ENCODE measurements at regions of chr1 and their contacts with region 1.

Region 1: GRCh38 chr1:110619412-110620249 is 13.5 kb upstream of the KCNA2 start:
- DNase-seq: peak; percentile 88
- H3K4me3 ChIP-seq: peak overlapping the region in 2 of 4 donors; percentile 3 to 32
- H3K27ac ChIP-seq: peak overlapping the region in 3 of 4 donors; percentile 28 to 62 (median 42)
- H3K4me1 ChIP-seq: peaks cover 0 to 12% (median 6%) of the 10 kb centered on the region in 4 donors
- H3K27me3 ChIP-seq: peaks cover 36% of the 10 kb centered on the region
- CTCF ChIP-seq: peak; percentile 88 to 96 (median 89)
- EP300 ChIP-seq: no peak
- POLR2A ChIP-seq: no peak

Region 2: GRCh38 chr1:110554871-110555801 is 64.5 kb before region 1 on chr1:
- in situ Hi-C with region 1: loop called in 1 of 4 experiments (anchors 10 kb)
- intact Hi-C with region 1: loop called (anchors 10 kb)
- DNase-seq: peak; percentile 36
- H3K4me3 ChIP-seq: peak overlapping the region in 2 of 4 donors; percentile 26 to 46
- H3K27ac ChIP-seq: peak overlapping the region in 3 of 4 donors; percentile 6 to 10 (median 8)
- H3K4me1 ChIP-seq: peaks cover 0 to 11% (median 8%) of the 10 kb centered on the region in 4 donors
- H3K27me3 ChIP-seq: peaks cover 54% of the 10 kb centered on the region
- CTCF ChIP-seq: peak; percentile 64 to 73 (median 67)
- EP300 ChIP-seq: no peak
- POLR2A ChIP-seq: no peak

Region 3: DNA sequence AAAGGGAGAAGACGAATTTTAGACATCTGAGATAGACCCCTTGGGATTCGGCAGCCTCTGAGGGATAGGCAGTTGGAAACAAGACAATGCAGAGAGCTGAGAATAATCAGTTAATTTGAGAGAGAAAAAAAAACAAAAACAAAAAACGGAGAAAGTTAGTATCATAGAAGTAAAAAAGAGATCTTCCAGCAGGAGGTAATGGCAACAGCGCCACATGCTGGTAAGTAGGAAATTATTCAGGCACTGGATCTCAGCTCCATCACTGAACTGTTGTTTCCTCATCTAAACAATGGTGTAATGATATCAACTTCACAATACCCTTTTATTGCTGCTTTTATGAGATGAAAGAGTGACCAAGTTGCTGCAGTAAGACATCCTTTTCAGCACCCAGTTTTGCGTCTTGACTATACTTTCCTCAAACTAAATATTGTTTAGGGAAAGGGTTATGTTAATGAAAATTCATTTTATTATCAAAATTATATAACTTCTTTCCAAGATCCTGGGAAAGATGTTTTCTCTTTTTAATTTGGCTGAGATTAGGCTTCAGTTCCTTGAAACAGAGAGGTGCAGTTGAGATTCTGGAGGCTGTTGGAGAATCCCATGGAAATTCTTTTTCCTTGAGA is 146.5 kb after region 1 on chr1:
- in situ Hi-C with region 1: loop called in 2 of 4 experiments (anchors 5 to 10 kb)
- intact Hi-C with region 1: no loop called
- DNase-seq: peak; percentile 25
- H3K4me3 ChIP-seq: no peak overlapping the region
- H3K27ac ChIP-seq: no peak overlapping the region
- H3K4me1 ChIP-seq: peaks cover 0 to 3% (median 0%) of the 10 kb centered on the region in 4 donors
- H3K27me3 ChIP-seq: peaks cover 19% of the 10 kb centered on the region
- CTCF ChIP-seq: peak; percentile 69 to 78 (median 76)
- EP300 ChIP-seq: no peak
- POLR2A ChIP-seq: no peak

Region 4: DNA sequence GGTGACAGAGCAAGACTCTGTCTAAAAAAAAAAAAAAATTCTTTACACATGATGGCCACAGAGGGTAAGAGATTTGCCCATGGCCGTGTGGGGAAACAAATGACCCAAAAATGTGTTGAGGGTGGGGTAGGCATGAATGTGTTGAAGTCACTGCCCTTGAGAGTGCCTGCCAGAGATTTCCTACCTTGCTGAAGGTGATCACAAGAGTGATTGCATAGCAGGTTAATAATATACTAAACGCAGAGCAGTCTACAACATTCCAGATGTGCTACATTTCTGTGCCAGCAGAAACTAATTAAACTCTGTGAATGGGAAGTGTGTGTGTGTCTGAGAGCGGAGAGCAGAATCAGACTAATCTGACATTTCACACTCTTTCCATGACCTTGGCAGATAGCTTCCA is 160.0 kb after region 1 on chr1:
- in situ Hi-C with region 1: loop called in 1 of 4 experiments (anchors 5 kb)
- intact Hi-C with region 1: no loop called
- DNase-seq: no peak
- H3K4me3 ChIP-seq: no peak overlapping the region
- H3K27ac ChIP-seq: no peak overlapping the region
- H3K4me1 ChIP-seq: no peaks in the 10 kb centered on the region
- H3K27me3 ChIP-seq: peaks cover 11% of the 10 kb centered on the region
- CTCF ChIP-seq: no peak
- EP300 ChIP-seq: no peak
- POLR2A ChIP-seq: no peak

Measured in transverse colon (tissue), 4 donors.